ENCODE measurements at regions of chr7 and their contacts with region 1.

Region 1: GRCh38 chr7:76020031-76020714 is 25.8 kb upstream of the TMEM120A start:
- DNase-seq: peak; percentile 71
- H3K4me3 ChIP-seq: no peak overlapping the region
- H3K27ac ChIP-seq: no peak overlapping the region
- H3K4me1 ChIP-seq: no peaks in the 10 kb centered on the region
- CTCF ChIP-seq: peak; percentile 97

Region 2: DNA sequence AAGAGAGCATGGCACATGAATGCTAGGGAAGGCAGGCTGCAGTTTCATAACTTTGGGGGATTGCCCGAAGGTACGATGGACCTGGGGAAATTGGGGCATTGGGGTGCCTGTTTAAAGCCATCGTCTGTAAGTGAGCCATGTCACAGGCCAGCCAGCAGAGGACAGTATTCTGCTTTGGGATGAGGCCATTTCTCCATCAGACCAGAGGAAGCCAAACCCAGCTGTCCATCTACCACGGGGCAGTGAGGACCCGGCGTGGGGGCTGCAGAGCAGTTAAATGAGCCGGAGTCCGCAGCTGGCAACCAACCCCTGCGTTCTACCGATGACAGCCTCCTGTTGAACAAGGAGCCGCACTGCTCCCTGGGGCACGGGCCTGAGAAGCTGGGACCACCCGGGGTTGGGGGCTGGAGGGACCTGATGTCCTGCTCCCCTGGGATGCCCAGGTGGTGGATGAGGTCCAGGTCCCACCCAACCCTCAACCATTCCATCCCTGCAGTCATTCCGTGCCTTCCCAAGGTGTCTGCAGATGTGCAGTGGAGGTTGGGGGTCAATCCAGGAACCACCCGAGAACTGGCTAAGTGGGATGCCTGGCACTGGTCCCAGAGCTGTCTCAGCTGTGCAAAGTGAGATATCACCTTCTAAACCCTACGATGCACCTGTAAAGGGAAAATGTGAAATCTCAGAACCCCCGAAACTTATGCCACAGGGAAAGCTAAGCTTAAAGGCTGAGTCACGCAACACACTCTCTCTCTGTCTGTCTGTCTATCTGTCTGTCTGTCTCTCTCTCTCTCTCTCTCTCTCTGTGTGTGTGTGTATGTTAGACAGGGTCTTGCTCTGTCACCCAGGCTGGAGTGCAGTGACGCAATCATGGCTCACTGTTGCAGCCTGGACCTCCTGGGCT is 153.4 kb before region 1 on chr7:
- CTCF ChIA-PET with region 1: interaction called, 4 read pairs
- POLR2A ChIA-PET with region 1: no interaction called
- intact Hi-C with region 1: loop called (anchors 1 kb)
- DNase-seq: peak; percentile 62
- H3K4me3 ChIP-seq: no peak overlapping the region
- H3K27ac ChIP-seq: no peak overlapping the region
- H3K4me1 ChIP-seq: no peaks in the 10 kb centered on the region
- CTCF ChIP-seq: peak; percentile 83